GM12878 (cell line): ENCODE measurements at regions of chr1 and their contacts with region 1.

Region 1: GRCh38 chr1:109643385-109644230 is 12.3 kb upstream of the GSTM4 start:
- DNase-seq: no peak
- ATAC-seq: peak; percentile 98
- H3K4me3 ChIP-seq: no peak overlapping the region
- H3K27ac ChIP-seq: no peak overlapping the region
- H3K4me1 ChIP-seq: peaks cover 9% of the 10 kb centered on the region
- H3K27me3 ChIP-seq: no peaks in the 10 kb centered on the region
- CTCF ChIP-seq: peak; percentile 91 to 97 (median 92)
- EP300 ChIP-seq: no peak
- POLR2A ChIP-seq: no peak
- RAD21 ChIP-seq: peak; percentile 87

Region 2: GRCh38 chr1:109548321-109549267 is 95.0 kb before region 1 on chr1 and contains the start of gene GNAI3:
- CTCF ChIA-PET with region 1: interaction called, 201 read pairs
- POLR2A ChIA-PET with region 1: interaction called, 13 read pairs
- RAD21 ChIA-PET with region 1: interaction called, 106 read pairs
- SMC1A ChIA-PET with region 1: interaction called, 117 read pairs
- in situ Hi-C with region 1: no loop called
- intact Hi-C with region 1: loop called (anchors 5 kb)
- DNase-seq: peak; percentile 85
- ATAC-seq: peak; percentile 95
- H3K4me3 ChIP-seq: peak within 1 kb of the TSS; percentile 92
- H3K27ac ChIP-seq: peak within 1 kb of the TSS; percentile 96
- H3K4me1 ChIP-seq: peaks cover 6% of the 10 kb centered on the region
- H3K27me3 ChIP-seq: no peaks in the 10 kb centered on the region
- CTCF ChIP-seq: no peak
- EP300 ChIP-seq: peak; percentile 13 to 61; a peak in 3 of 4 replicates
- POLR2A ChIP-seq: peak; percentile 99
- RAD21 ChIP-seq: no peak
- polyA plus RNA-seq, gene GNAI3: 6.2 TPM

Region 3: DNA sequence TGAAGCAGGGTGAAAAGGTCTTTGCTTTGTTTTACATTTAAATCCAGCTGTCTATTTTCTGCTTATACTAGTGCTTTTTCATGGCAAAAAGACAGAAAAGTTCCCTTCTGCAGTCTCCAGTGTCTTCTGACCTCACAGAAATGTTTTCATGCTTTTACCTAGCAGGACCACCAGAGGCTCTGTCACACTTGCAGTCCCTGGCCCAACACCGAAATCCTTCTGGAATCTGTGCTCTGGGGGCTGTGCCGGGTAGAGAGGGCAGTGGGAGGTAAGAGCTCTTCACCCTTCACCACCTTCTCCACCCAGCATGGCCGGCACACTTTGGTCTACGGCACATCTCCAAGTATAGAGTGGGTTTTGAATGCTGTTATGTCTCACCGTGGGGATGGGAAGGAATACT is 45.0 kb before region 1 on chr1:
- CTCF ChIA-PET with region 1: interaction called, 11 read pairs
- POLR2A ChIA-PET with region 1: no interaction called
- RAD21 ChIA-PET with region 1: no interaction called
- SMC1A ChIA-PET with region 1: interaction called, 3 read pairs
- in situ Hi-C with region 1: no loop called
- intact Hi-C with region 1: no loop called
- DNase-seq: no peak
- ATAC-seq: peak; percentile 48; the same call in 2 of the 3 replicates
- H3K4me3 ChIP-seq: no peak overlapping the region
- H3K27ac ChIP-seq: no peak overlapping the region
- H3K4me1 ChIP-seq: no peaks in the 10 kb centered on the region
- H3K27me3 ChIP-seq: no peaks in the 10 kb centered on the region
- CTCF ChIP-seq: peak in 2 of 3 experiments; percentile 9 to 13; a peak in 1 of 6 replicates
- EP300 ChIP-seq: no peak
- POLR2A ChIP-seq: no peak
- RAD21 ChIP-seq: 0 out of 2 replicates have a peak, but pooled peaks have one; percentile 13

Region 4: GRCh38 chr1:109630081-109630897 is 13.3 kb before region 1 on chr1:
- CTCF ChIA-PET with region 1: interaction called, 299 read pairs
- POLR2A ChIA-PET with region 1: no interaction called
- RAD21 ChIA-PET with region 1: interaction called, 15 read pairs
- SMC1A ChIA-PET with region 1: interaction called, 3 read pairs
- in situ Hi-C with region 1: no loop called
- intact Hi-C with region 1: no loop called
- DNase-seq: no peak
- ATAC-seq: peak; percentile 14; the same call in 1 of the 3 replicates
- H3K4me3 ChIP-seq: no peak overlapping the region
- H3K27ac ChIP-seq: no peak overlapping the region
- H3K4me1 ChIP-seq: peaks cover 12% of the 10 kb centered on the region
- H3K27me3 ChIP-seq: no peaks in the 10 kb centered on the region
- CTCF ChIP-seq: peak; percentile 7 to 33 (median 11); a peak in 3 of 6 replicates
- EP300 ChIP-seq: no peak
- POLR2A ChIP-seq: no peak; the same call in 1 of the 2 replicates
- RAD21 ChIP-seq: peak; percentile 31; the same call in 1 of the 2 replicates

Region 5: GRCh38 chr1:109669246-109669938 is 25.8 kb after region 1 on chr1:
- CTCF ChIA-PET with region 1: interaction called, 21 read pairs
- POLR2A ChIA-PET with region 1: no interaction called
- RAD21 ChIA-PET with region 1: interaction called, 4 read pairs
- SMC1A ChIA-PET with region 1: no interaction called
- in situ Hi-C with region 1: no loop called
- intact Hi-C with region 1: no loop called
- DNase-seq: no peak
- ATAC-seq: no peak
- H3K4me3 ChIP-seq: no peak overlapping the region
- H3K27ac ChIP-seq: no peak overlapping the region
- H3K4me1 ChIP-seq: peaks cover 10% of the 10 kb centered on the region
- H3K27me3 ChIP-seq: no peaks in the 10 kb centered on the region
- CTCF ChIP-seq: no peak
- EP300 ChIP-seq: no peak
- POLR2A ChIP-seq: no peak
- RAD21 ChIP-seq: no peak

Region 6: GRCh38 chr1:109761227-109762038 is 117.8 kb after region 1 on chr1:
- CTCF ChIA-PET with region 1: interaction called, 13 read pairs
- POLR2A ChIA-PET with region 1: no interaction called
- RAD21 ChIA-PET with region 1: interaction called, 5 read pairs
- SMC1A ChIA-PET with region 1: interaction called, 8 read pairs
- in situ Hi-C with region 1: no loop called
- intact Hi-C with region 1: no loop called
- DNase-seq: no peak
- ATAC-seq: no peak
- H3K4me3 ChIP-seq: no peak overlapping the region
- H3K27ac ChIP-seq: no peak overlapping the region
- H3K4me1 ChIP-seq: no peaks in the 10 kb centered on the region
- H3K27me3 ChIP-seq: no peaks in the 10 kb centered on the region; a peak in 1 of 4 replicates
- CTCF ChIP-seq: no peak
- EP300 ChIP-seq: no peak
- POLR2A ChIP-seq: no peak
- RAD21 ChIP-seq: no peak

Region 7: GRCh38 chr1:110011527-110012041 is 368.0 kb after region 1 on chr1:
- CTCF ChIA-PET with region 1: interaction called, 33 read pairs
- POLR2A ChIA-PET with region 1: no interaction called
- RAD21 ChIA-PET with region 1: interaction called, 9 read pairs
- SMC1A ChIA-PET with region 1: interaction called, 8 read pairs
- in situ Hi-C with region 1: no loop called
- intact Hi-C with region 1: no loop called
- DNase-seq: peak; percentile 84
- ATAC-seq: peak; percentile 99
- H3K4me3 ChIP-seq: no peak overlapping the region
- H3K27ac ChIP-seq: peak overlapping the region; percentile 34
- H3K4me1 ChIP-seq: peaks cover 27% of the 10 kb centered on the region
- H3K27me3 ChIP-seq: no peaks in the 10 kb centered on the region
- CTCF ChIP-seq: peak; percentile 68 to 89 (median 74)
- EP300 ChIP-seq: no peak
- POLR2A ChIP-seq: no peak
- RAD21 ChIP-seq: peak; percentile 75

Region 8: DNA sequence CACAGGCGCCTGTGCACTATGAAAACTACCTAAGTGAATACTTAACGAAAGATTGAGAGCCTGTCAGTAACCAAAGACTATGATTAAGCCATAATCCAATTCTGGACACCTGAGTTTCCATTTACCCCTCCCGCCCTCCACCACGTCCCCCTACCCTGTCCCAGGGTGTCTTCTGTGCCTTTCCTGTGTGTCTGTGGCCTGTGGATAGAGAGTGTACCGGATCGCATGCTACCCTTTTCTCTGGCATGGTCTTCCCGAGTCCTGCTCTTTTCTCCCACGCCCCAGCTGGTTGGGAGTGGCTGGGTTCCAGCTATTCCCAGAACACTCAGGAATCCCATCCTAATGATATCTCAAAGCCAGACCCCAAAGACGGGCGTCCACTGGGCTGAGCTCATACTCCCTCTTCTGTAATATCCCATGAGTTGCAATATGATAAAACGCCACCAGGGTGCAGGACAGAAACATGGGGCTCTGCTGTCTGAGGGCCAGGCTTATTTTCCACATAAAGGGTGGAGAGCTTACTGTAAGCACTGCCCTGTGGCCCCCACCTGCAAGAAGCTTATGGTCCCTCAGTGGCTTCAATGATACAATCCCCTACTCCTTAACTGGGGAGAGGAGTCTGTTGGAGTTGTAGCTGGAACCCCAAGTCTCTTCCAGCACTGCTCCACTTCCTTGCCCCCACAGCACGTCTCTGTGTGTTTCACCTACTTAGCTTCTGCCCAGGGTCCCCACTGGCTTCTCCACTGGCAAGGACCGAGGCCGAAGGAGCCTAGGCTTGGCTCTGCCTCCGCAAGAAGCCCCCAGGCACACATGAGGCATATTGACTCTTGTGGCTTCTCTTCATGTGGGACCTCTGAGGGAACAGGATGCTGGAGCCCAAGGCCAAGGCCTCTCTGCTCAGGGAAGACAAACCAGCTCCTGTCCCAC is 444.5 kb after region 1 on chr1:
- CTCF ChIA-PET with region 1: no interaction called
- POLR2A ChIA-PET with region 1: no interaction called
- RAD21 ChIA-PET with region 1: no interaction called
- SMC1A ChIA-PET with region 1: no interaction called
- in situ Hi-C with region 1: no loop called
- intact Hi-C with region 1: no loop called
- DNase-seq: no peak
- ATAC-seq: peak; percentile 89
- H3K4me3 ChIP-seq: no peak overlapping the region
- H3K27ac ChIP-seq: no peak overlapping the region
- H3K4me1 ChIP-seq: peaks cover 5% of the 10 kb centered on the region; the same call in 1 of the 2 replicates
- H3K27me3 ChIP-seq: peaks cover 5 to 8% of the 10 kb centered on the region in 2 experiments; a peak in 2 of 4 replicates
- CTCF ChIP-seq: peak; percentile 61 to 74 (median 67)
- EP300 ChIP-seq: no peak
- POLR2A ChIP-seq: no peak
- RAD21 ChIP-seq: peak; percentile 71